ENCODE measurements at regions of chr10 and their contacts with region 1.

Region 1: DNA sequence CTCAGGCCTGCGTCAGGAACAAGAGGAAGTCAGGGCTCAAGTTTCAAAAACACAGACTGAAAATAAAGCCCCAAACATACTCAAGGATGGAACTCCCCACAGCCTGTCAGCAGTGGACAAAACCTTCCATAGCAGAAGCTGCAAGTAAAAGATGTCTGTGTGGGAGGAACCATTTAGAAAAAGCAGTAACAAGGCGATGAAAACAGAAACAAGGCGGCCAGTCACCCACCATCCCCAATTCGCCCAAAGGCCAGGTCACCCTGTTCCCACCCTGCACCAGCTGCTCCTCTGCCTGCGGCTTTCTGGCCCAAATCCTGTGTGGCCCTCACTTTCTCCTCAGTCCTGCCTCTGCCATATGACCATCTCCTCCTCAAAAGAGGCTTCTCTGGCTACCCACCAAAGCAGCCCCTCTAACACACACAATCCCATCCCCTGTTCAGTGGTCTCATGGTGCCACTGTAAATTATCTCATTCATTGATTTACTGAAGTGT is 27.8 kb downstream of the KCNMA1 start:
- DNase-seq: no peak
- H3K4me3 ChIP-seq: no peak overlapping the region
- CTCF ChIP-seq: no peak

Region 2: GRCh38 chr10:77436257-77436975 is 173.4 kb before region 1 on chr10:
- in situ Hi-C with region 1: loop called (anchors 5 kb)
- DNase-seq: no peak
- H3K4me3 ChIP-seq: no peak overlapping the region
- CTCF ChIP-seq: no peak

Region 3: DNA sequence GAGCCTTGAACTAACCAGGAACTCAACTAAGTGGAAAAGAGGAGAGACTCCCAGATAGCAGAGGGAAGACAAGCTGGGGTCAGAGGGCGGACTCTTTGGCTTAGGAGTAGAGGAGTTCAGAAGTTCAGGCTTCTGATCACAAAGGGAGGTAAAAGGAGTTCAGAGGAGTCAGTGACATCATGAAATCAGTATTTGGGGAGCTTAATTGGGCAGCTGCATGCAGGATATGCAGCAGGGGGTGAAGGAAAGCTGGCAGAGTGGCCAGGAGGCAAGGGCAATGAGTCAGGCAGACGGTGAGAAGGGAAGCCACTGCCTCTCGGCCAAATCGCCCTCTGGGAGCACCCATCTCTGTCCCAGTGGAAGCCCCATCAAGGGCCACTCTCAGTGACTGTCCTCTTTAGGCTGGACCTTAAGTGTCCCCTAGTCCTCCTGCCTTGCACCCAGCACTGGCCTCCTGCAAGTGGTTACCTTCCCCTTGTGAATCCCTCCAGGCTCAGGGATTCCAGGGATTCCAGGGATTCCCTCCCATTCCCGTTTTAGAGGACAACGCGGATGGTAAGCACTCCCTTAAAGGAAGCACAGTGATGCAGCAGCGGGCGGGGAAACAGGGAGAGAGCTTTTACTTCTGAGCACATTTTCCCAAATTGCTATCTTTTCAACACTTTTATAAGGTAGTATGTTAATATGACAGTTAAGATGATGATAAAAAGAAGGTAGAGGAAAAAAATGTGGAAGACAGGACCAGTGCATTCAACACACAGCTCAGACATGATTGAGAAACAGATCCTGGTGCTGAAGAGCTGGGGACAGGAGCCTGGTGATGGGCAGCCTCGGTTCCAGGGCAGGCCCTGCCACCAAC is 44.9 kb before region 1 on chr10:
- in situ Hi-C with region 1: loop called (anchors 5 kb)
- DNase-seq: no peak
- H3K4me3 ChIP-seq: no peak overlapping the region
- CTCF ChIP-seq: no peak